T-cell (primary cell): ENCODE measurements at regions of chr15 and their contacts with region 1.

Region 1: GRCh38 chr15:65610871-65611718 is at the start of gene INTS14:
- DNase-seq: peak; percentile 75 to 94 (median 85)
- ATAC-seq: peak; percentile 96 to 97 (median 96)
- H3K4me3 ChIP-seq: peak within 1 kb of the TSS; percentile 79 to 94
- H3K4me3 Mint-ChIP-seq: peak within 1 kb of the TSS; percentile 94 to 99 (median 95)
- H3K27ac ChIP-seq: peak within 1 kb of the TSS; percentile 94
- H3K27ac Mint-ChIP-seq: peak within 1 kb of the TSS; percentile 98
- H3K4me1 ChIP-seq: peaks cover 6 to 30% of the 10 kb centered on the region in 2 experiments
- H3K4me1 Mint-ChIP-seq: peaks cover 40 to 47% (median 47%) of the 10 kb centered on the region in 3 donors
- H3K27me3 ChIP-seq: no peaks in the 10 kb centered on the region
- H3K27me3 Mint-ChIP-seq: no peaks in the 10 kb centered on the region
- total RNA-seq, gene INTS14: 26.6 to 36.4 (median 34.4) TPM

Region 2: DNA sequence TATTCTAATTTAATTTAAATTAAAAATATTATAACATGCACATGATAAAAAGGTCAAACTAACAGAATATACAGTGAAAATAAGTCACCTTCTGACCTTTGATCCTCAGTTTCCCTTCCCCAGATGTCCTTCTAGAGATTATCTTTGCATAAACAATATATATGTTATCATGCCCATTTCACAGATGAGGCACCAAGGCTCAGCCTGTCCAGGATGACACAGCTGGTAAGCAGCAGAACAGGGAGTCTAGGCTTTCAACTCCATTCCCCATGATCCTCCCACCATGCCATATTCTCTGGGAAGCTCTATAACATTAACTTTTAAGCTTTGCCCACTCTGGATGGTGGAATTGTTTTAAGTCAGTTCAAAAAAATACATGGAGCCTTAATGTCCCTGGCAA is 12.0 kb after region 1 on chr15:
- CTCF ChIA-PET with region 1: no interaction called
- POLR2A ChIA-PET with region 1: interaction called in 1 of 2 experiments, 10 read pairs
- DNase-seq: no peak
- ATAC-seq: no peak
- H3K4me3 ChIP-seq: no peak overlapping the region
- H3K4me3 Mint-ChIP-seq: no peak overlapping the region
- H3K27ac ChIP-seq: no peak overlapping the region
- H3K27ac Mint-ChIP-seq: no peak overlapping the region
- H3K4me1 ChIP-seq: no peaks in the 10 kb centered on the region
- H3K4me1 Mint-ChIP-seq: no peaks in the 10 kb centered on the region
- H3K27me3 ChIP-seq: no peaks in the 10 kb centered on the region
- H3K27me3 Mint-ChIP-seq: no peaks in the 10 kb centered on the region

Region 3: DNA sequence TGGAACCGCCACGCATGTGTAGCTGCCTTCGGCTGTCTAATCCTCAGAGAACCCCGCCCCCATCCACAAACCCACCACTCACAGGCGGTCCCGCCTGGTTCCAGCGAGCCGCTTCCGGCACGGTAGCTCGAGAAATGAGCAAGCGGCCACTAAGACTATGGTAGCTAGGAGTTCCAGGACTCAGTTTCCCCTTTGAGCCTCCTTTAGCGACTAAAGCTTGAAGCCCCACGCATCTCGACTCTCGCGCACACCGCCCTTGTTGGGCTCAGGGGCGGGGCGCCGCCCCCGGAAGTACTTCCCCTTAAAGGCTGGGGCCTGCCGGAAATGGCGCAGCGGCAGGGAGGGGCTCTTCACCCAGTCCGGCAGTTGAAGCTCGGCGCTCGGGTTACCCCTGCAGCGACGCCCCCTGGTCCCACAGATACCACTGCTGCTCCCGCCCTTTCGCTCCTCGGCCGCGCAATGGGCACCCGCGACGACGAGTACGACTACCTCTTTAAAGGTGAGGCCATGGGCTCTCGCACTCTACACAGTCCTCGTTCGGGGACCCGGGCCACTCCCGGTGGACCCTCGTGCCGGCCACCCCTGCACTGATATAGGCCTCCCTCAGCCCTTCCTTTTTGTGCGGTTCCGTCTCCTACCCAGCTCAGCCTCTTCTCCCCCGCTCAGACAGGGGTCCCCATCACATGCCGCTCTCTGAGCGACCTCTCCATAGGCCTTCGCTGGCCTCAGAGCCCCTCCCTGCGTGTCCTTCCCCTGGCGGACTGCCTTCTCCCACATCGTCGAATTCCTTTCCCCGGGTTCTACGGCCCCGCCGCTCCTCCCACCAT is 258.2 kb after region 1 on chr15 and contains the start of gene RAB11A:
- CTCF ChIA-PET with region 1: interaction called in 1 of 2 experiments, 11 read pairs
- POLR2A ChIA-PET with region 1: no interaction called
- DNase-seq: peak; percentile 88 to 96 (median 93)
- ATAC-seq: peak; percentile 93 to 94 (median 94)
- H3K4me3 ChIP-seq: peak within 1 kb of the TSS; percentile 89 to 99
- H3K4me3 Mint-ChIP-seq: peak within 1 kb of the TSS; percentile 95 to 100 (median 98)
- H3K27ac ChIP-seq: peak within 1 kb of the TSS; percentile 98
- H3K27ac Mint-ChIP-seq: peak within 1 kb of the TSS; percentile 97
- H3K4me1 ChIP-seq: peaks cover 0 to 27% of the 10 kb centered on the region in 2 experiments
- H3K4me1 Mint-ChIP-seq: peaks cover 28 to 39% (median 35%) of the 10 kb centered on the region in 3 donors
- H3K27me3 ChIP-seq: no peaks in the 10 kb centered on the region
- H3K27me3 Mint-ChIP-seq: no peaks in the 10 kb centered on the region
- total RNA-seq, gene RAB11A: 82.4 to 103 (median 97.5) TPM